ENCODE measurements at regions of chr22 and their contacts with region 1.

Region 1: DNA sequence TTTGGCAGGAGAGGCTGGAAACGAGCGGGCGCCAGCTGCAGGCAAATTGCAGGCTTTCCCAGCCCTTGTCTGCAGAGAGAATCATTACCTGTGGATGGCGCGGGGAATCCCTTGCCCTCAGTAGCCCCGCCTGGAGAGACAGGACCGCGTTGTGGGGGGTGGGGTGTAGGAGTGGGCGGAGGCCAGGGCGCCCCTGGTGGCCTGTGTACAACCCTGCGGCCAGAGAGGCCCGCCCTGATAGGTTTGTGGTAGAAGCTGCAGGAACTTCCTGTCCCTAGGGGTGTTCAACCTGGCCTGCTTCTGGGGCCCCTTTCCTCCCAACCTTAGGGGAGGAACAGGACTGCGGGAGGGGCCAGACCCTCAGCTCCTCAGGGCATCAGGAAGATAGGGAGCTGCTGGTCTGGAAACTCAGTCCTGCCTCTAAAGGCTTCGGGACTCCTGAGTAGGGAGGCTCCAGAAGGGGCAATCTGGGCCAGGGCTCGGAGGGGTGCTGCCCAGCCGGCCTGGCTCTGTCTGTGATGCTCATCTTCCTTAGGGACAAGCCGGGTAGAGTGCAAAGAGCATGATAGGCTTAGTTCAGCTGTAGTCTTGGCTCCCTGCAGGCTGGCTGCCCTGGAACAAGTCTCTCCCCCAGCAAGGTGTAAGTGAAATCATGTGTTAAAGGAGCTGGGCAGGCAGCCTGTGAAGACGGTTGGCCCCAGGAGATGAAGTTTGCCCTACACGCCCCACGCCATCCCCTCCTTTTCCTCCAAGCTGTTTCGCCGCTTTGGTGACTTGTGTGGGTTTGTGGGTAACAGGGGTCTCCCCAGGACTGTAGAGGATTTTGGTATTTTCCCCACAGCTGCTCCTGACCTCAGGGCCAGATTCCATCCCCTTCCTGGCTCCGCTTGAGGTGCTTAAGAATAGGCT is 24.1 kb upstream of the SUSD2 start:
- DNase-seq: peak; percentile 64
- ATAC-seq: peak; percentile 81
- H3K4me3 ChIP-seq: peak overlapping the region; percentile 83
- H3K27ac ChIP-seq: peak overlapping the region; percentile 84
- H3K4me1 ChIP-seq: peaks cover 36% of the 10 kb centered on the region
- H3K27me3 ChIP-seq: no peaks in the 10 kb centered on the region
- CTCF ChIP-seq: peak; percentile 89
- POLR2A ChIP-seq: no peak
- RAD21 ChIP-seq: peak; percentile 41

Region 2: DNA sequence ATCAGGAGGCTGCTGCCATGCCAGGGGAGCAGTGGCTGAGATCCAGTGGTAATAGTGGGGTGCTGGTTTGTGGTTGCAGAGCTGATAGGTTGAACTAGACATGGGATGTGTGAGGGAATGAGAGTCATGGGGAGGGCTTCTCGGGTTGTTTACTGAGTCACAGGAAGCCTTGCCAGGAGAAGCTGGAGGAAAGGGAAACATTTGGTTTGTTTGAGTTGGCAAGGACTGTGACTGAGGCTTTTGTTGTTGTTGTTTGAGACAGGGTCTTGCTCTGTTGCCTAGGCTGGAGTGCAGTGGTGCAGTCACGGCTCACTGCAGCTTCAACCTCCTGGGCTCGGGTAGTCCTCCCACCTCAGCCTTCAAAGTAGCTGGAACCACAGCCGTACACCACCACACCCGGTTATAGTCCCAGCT is 96.8 kb before region 1 on chr22:
- CTCF ChIA-PET with region 1: interaction called, 5 read pairs
- POLR2A ChIA-PET with region 1: no interaction called
- dilution Hi-C with region 1: no loop called
- in situ Hi-C with region 1: no loop called
- intact Hi-C with region 1: loop called (anchors 5 kb)
- DNase-seq: peak; percentile 96
- ATAC-seq: peak; percentile 77
- H3K4me3 ChIP-seq: no peak overlapping the region
- H3K27ac ChIP-seq: peak overlapping the region; percentile 89
- H3K4me1 ChIP-seq: peaks cover 22% of the 10 kb centered on the region
- H3K27me3 ChIP-seq: no peaks in the 10 kb centered on the region
- CTCF ChIP-seq: no peak
- POLR2A ChIP-seq: no peak
- RAD21 ChIP-seq: no peak

Region 3: GRCh38 chr22:24146194-24146616 is 11.0 kb before region 1 on chr22:
- CTCF ChIA-PET with region 1: interaction called, 19 read pairs
- POLR2A ChIA-PET with region 1: interaction called, 7 read pairs
- dilution Hi-C with region 1: no loop called
- in situ Hi-C with region 1: no loop called
- intact Hi-C with region 1: no loop called
- DNase-seq: peak; percentile 83
- ATAC-seq: peak; percentile 13
- H3K4me3 ChIP-seq: no peak overlapping the region
- H3K27ac ChIP-seq: peak overlapping the region; percentile 85
- H3K4me1 ChIP-seq: peaks cover 54% of the 10 kb centered on the region
- H3K27me3 ChIP-seq: no peaks in the 10 kb centered on the region
- CTCF ChIP-seq: no peak
- POLR2A ChIP-seq: no peak
- RAD21 ChIP-seq: no peak

Region 4: DNA sequence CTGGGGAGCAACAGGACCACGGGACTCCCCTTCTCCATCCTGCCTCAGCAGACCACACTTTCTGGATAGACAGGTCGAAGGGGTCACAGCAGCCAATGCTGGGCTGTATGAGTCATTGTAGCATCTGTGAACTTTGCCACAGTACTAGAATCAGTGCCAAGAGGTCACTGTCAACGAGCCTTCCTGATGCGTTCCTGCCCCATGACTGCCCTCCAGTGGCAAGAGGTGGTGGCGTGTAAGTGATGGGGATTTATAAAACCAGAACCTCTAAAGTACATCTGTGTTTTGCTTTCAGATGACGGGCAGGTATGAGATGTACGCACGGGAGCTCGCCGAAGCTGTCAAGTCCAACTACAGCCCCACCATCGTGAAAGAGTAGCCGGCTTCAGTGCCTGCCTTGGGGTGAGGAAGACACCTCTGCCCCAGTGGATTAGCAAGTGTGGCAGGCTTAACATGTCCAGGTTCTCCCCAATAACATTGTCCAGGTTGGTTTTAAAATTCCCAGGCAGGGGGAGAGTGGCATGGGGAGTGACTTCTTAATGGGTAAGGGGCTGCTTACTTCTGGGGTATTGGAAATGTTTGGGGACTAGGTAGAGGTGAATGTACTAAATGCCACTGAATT is 368.4 kb after region 1 on chr22:
- CTCF ChIA-PET with region 1: no interaction called
- POLR2A ChIA-PET with region 1: no interaction called
- dilution Hi-C with region 1: no loop called
- in situ Hi-C with region 1: no loop called
- intact Hi-C with region 1: no loop called
- DNase-seq: peak; percentile 65
- ATAC-seq: peak; percentile 94
- H3K4me3 ChIP-seq: no peak overlapping the region
- H3K27ac ChIP-seq: no peak overlapping the region
- H3K4me1 ChIP-seq: peaks cover 2% of the 10 kb centered on the region; the same call in 1 of the 2 replicates
- H3K27me3 ChIP-seq: no peaks in the 10 kb centered on the region; the same call in 1 of the 2 replicates
- CTCF ChIP-seq: peak; percentile 86
- POLR2A ChIP-seq: no peak
- RAD21 ChIP-seq: peak; percentile 90

Measured in IMR-90 (cell line).